BJ (cell line): ENCODE measurements at regions of chr16 and their contacts with region 1.

Region 1: DNA sequence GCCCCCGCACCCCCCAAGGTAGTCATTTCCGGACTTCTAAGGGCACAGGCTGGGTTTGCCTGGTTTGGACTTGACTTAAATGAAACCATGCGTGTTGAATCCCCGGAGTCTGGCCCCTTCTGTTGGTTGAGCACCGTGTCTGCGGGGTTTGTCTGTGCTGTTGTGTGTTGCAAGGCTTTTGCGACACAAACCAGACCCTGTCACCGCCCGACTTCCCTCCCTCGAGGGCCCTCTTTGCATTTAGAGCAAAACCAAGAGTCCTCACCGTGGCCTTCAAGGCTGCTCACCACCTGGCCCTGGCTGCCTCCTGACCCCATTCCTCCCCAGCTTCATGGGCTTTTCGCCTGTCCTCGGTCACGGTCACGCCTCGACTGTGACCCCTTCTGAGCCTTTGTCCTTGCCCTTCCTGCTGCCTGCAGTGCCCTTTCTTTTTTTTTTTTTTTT is 7.4 kb downstream of the CRISPLD2 start:
- DNase-seq: no peak
- H3K4me3 ChIP-seq: no peak overlapping the region
- H3K27me3 ChIP-seq: no peaks in the 10 kb centered on the region
- CTCF ChIP-seq: no peak

Region 2: GRCh38 chr16:84813141-84813934 is 13.8 kb before region 1 on chr16:
- CTCF ChIA-PET with region 1: no interaction called
- POLR2A ChIA-PET with region 1: no interaction called
- DNase-seq: no peak
- H3K4me3 ChIP-seq: no peak overlapping the region
- H3K27me3 ChIP-seq: no peaks in the 10 kb centered on the region
- CTCF ChIP-seq: no peak

Region 3: GRCh38 chr16:86391987-86392386 is 1564.8 kb after region 1 on chr16:
- CTCF ChIA-PET with region 1: no interaction called
- POLR2A ChIA-PET with region 1: interaction called, 11 read pairs
- DNase-seq: no peak
- H3K4me3 ChIP-seq: no peak overlapping the region
- H3K27me3 ChIP-seq: no peaks in the 10 kb centered on the region
- CTCF ChIP-seq: no peak